ENCODE measurements at regions of chr9 and their contacts with region 1.

Region 1: DNA sequence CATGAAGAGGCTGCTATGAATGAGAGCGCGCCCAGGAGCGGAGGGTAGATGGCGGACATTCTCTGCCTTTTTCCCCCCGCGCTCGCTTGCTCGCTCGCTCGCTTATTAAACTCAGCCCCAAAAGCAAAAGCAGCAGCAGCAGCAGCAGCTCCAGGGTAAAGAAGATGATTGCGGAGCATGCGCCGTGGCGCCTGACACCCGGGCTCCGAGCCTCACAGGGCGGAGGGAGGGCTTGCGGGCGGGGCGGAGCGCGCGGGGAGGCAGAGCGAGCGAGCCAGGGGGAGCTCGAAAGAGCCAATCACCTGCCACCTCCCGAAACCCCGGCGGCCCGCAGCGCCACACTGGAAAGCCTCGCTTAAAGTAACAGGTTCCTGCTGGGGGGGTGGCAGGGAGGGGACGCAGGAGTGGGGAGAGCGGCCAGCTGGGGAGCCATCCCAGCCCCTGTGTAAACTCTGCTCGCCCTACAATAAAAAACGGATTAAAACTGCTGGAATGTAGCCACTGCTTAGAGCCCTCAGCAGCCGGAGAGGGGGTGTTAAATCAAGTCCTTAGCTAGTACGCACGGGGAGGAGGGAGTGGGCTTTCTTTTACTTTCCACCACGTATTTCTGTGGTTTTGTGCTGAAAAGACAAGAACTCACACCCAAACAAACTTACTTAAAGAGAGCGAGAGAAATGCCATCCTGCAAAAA is at the start of gene MLLT3:
- DNase-seq: peak; percentile 98
- H3K4me3 Mint-ChIP-seq: peak within 1 kb of the TSS; percentile 98
- H3K27ac Mint-ChIP-seq: peak within 1 kb of the TSS; percentile 99
- H3K4me1 Mint-ChIP-seq: peaks cover 43% of the 10 kb centered on the region
- H3K27me3 Mint-ChIP-seq: no peaks in the 10 kb centered on the region

Region 2: GRCh38 chr9:20356403-20357035 is 266.0 kb before region 1 on chr9:
- CTCF ChIA-PET with region 1: interaction called, 16 read pairs
- DNase-seq: peak; percentile 80
- H3K4me3 Mint-ChIP-seq: peak overlapping the region; percentile 29
- H3K27ac Mint-ChIP-seq: peak overlapping the region; percentile 86
- H3K4me1 Mint-ChIP-seq: peaks cover 96% of the 10 kb centered on the region
- H3K27me3 Mint-ChIP-seq: no peaks in the 10 kb centered on the region

Region 3: DNA sequence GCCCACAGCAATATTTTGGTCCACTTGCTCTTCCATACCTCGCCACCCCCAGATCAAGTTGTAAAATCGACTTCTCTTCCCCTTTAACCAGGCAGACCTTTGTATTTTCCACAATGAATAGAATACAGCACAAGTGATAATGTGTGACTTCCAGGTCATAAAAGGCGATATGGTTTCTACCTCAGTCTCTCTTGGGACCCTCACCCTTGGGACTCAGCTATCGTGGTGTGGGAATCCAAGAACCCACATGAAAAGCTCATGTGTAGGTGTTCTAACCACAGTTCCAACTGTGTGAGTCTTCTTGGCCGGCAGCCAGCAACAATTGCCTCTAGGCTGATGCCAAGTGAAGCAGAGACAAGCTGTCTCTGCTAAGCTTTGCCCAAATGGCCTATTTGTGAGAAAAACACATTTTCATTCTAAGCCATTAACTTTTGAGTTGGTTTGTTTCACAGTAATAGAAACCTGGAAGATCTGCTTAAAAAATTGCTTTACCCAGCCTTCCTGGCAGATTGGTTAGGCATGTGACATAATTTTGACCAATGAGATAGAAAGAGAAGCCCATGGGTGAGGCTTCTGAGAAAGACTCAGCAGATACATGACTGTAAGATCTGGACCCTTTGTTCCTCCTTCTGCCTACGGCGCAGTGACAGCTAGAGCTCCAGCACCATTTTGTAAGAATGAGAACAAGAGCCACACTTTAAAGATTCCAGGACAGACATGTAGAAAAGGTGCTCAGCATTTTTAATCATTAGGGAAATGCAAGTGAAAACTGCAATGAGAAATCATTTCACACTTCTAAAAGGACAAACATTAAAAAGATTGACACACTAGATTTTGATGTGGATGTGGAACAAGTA is 18.1 kb after region 1 on chr9:
- CTCF ChIA-PET with region 1: interaction called, 15 read pairs
- DNase-seq: peak; percentile 73
- H3K4me3 Mint-ChIP-seq: no peak overlapping the region
- H3K27ac Mint-ChIP-seq: peak overlapping the region; percentile 42
- H3K4me1 Mint-ChIP-seq: peaks cover 14% of the 10 kb centered on the region
- H3K27me3 Mint-ChIP-seq: peaks cover 18% of the 10 kb centered on the region

Region 4: DNA sequence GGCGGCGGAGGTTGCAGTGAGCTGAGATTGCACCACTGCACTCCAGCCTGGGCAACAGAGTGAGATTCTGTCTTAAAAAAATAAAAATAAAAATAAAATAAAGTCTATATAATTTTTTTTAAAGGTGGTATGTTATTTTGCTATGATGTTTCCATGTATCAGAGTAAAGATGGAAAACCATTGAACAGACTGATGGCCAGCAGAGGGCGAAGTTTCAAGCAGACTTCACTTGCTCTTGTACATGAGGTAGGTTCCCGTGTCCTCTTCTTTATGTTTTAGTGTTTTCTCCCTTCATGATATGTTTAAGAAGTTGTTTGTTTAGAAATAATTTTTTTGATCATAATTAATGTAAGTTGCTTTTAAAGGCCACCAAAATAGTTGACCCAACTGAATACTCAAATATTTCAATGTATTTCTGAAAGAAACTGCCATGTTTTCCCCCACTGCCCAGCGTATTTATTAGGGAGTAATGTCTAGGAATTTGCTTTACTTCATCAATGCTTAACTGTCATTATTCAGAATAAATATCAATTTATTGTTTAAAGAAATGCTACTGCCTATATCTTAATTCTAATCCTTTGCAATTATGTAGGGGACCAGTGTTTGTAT is 262.6 kb after region 1 on chr9:
- CTCF ChIA-PET with region 1: interaction called, 10 read pairs
- DNase-seq: peak; percentile 75
- H3K4me3 Mint-ChIP-seq: no peak overlapping the region
- H3K27ac Mint-ChIP-seq: no peak overlapping the region
- H3K4me1 Mint-ChIP-seq: no peaks in the 10 kb centered on the region
- H3K27me3 Mint-ChIP-seq: no peaks in the 10 kb centered on the region

Region 5: GRCh38 chr9:21016701-21017491 is 394.4 kb after region 1 on chr9:
- CTCF ChIA-PET with region 1: no interaction called
- DNase-seq: no peak
- H3K4me3 Mint-ChIP-seq: no peak overlapping the region
- H3K27ac Mint-ChIP-seq: no peak overlapping the region
- H3K4me1 Mint-ChIP-seq: no peaks in the 10 kb centered on the region
- H3K27me3 Mint-ChIP-seq: no peaks in the 10 kb centered on the region

Region 6: GRCh38 chr9:21110708-21111576 is 488.5 kb after region 1 on chr9:
- CTCF ChIA-PET with region 1: interaction called, 17 read pairs
- DNase-seq: no peak
- H3K4me3 Mint-ChIP-seq: no peak overlapping the region
- H3K27ac Mint-ChIP-seq: no peak overlapping the region
- H3K4me1 Mint-ChIP-seq: no peaks in the 10 kb centered on the region
- H3K27me3 Mint-ChIP-seq: peaks cover 10% of the 10 kb centered on the region